ENCODE measurements at regions of chr6 and their contacts with region 1.

Region 1: DNA sequence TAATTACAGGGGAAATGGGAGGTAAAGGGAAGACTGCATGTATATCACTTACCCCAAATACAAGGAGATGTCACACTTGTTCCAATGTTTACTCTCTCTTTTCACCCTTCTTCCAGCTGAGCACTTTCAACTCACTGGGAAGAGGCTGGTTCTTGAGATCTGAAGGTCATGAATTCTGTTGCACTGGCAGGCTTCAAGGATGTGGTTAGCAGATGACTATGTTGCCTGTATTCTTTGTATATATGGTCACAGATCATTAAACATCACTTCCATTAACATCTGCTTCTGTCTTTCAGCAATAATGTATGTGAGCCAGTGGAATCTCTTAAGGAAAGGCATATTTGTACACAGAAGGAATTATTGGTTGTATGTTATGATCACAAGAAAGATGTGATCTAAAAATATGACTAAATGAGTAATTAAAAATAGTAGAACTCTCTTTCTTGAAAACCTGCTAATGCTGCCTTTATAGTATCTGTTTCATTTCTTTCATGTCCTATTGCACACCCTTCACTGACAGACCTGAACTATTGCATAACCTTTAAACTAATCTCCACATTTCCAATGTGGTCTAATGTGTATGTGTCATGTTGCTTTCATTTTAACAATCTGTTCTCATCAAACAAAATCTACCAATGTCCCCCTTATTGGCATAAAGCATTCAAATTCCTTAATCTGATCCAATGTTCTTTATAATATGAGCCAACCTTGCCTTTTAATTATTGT is 131.4 kb upstream of the EPHA7 start:
- DNase-seq: no peak
- H3K4me3 ChIP-seq: no peak overlapping the region
- H3K27ac ChIP-seq: no peak overlapping the region
- H3K4me1 ChIP-seq: no peaks in the 10 kb centered on the region
- H3K27me3 ChIP-seq: no peaks in the 10 kb centered on the region
- CTCF ChIP-seq: no peak
- POLR2A ChIP-seq: no peak

Region 2: GRCh38 chr6:93562582-93562981 is 11.9 kb after region 1 on chr6:
- intact Hi-C with region 1: loop called (anchors 1 kb)
- DNase-seq: no peak
- H3K4me3 ChIP-seq: no peak overlapping the region
- H3K27ac ChIP-seq: no peak overlapping the region
- H3K4me1 ChIP-seq: no peaks in the 10 kb centered on the region
- H3K27me3 ChIP-seq: no peaks in the 10 kb centered on the region
- CTCF ChIP-seq: no peak
- POLR2A ChIP-seq: no peak

Region 3: DNA sequence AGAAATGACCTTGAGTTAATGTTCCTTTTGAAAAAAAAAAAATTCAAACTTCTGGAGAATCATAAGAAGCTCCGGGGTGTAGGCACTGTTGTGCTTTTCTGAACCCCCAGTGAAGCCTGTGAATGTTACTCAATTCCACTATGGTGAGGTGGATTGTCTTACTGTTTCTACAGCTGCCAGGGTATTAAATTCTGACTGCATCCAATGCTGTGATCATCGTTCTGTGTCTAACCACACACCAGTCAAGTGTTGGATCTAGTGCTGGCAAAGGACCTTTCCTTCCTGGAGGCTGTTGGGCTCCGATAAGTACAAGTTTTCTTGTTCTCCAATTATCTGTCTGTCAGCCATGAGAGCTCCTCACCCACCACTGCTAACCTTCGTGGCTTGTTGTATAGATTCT is 30.7 kb after region 1 on chr6:
- intact Hi-C with region 1: loop called (anchors 2 kb)
- DNase-seq: no peak
- H3K4me3 ChIP-seq: no peak overlapping the region
- H3K27ac ChIP-seq: no peak overlapping the region
- H3K4me1 ChIP-seq: no peaks in the 10 kb centered on the region
- H3K27me3 ChIP-seq: no peaks in the 10 kb centered on the region
- CTCF ChIP-seq: no peak
- POLR2A ChIP-seq: no peak

Region 4: DNA sequence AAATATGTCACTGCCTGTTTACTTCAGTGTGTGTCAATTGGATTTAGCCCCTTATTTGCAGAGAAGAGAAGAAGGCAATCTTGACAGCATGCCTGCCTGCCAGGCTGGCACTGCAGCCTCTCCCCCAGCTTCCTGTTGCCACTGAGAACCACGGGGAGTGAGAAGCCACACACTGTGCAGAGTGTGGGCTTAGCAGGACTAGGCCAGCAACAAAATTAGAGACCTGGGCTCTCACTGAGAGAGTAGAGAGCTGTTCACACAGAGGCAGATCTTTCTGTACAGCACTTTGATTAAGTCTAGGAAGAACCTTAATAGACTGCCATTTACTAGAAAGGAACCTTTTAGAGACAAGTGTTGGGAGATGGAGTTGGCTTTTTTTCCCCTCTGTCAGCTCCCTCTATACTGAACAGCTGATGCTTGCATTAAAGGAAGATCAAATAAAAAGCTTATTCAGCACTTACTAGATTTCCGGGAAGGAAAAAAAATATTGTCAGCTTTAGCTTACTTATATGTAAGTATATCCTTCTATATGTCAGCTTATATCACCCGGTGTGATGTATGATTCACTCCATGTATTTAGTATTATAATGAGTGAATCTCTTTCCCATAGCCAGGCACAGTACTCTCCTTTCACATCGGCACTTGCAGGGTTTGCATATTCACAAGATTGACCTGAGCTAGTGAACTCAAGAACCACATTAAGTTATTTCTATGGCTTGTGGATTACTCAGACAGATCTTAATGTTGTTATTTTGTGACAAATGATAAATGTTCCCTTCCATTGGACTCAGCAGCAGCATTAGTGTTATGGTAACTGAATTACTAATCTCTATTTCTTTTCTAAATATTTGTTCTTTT is 719.6 kb after region 1 on chr6:
- intact Hi-C with region 1: no loop called
- DNase-seq: no peak
- H3K4me3 ChIP-seq: no peak overlapping the region
- H3K27ac ChIP-seq: no peak overlapping the region
- H3K4me1 ChIP-seq: no peaks in the 10 kb centered on the region
- H3K27me3 ChIP-seq: no peaks in the 10 kb centered on the region
- CTCF ChIP-seq: no peak
- POLR2A ChIP-seq: no peak